ENCODE measurements at regions of chr3 and their contacts with region 1.

Region 1: DNA sequence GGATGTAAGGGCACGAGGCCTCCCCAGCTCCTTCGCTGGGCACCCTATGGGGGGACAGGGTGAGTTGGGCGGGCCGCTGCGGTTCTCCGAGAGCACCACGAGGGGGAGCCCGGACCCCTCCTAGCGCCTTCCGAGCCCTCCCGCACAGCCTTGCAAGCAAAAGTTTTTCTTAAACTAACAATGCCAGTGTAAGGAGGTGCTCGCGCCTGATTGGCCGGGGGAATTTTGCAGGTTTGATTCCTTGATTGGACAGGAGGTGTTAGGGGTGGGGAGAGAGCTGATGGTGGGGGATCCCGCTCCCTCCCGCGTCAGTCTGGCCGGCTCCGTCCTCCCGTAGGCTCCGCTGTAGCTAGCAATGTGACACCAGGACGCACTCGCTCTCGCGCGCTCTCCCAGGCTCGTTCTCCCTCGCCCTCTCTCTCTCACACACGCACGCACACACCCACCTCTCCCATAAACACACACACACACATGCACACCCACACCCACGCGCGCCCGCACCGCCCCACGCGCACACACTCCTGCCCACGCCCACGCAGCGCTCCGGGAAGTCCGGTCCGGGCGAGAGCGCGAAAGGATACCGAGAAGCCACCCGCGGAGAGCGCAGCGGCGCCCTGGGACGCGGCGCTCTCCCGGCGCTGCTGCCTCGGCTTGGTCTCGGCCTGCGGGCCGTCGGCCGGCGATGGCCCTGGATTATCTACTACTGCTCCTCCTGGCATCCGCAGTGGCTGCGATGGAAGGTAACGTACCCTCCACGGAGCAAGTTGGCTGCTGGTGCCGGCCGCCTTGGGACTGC is at the start of gene EPHB1:
- DNase-seq: peak; percentile 94
- H3K4me3 ChIP-seq: peak within 1 kb of the TSS; percentile 54 to 82 (median 59)
- H3K27ac ChIP-seq: peak within 1 kb of the TSS; percentile 58 to 81 (median 70)
- H3K4me1 ChIP-seq: peaks cover 0 to 54% (median 36%) of the 10 kb centered on the region in 4 donors
- H3K27me3 ChIP-seq: peaks cover 0 to 25% (median 5%) of the 10 kb centered on the region in 3 donors
- CTCF ChIP-seq: peak; percentile 75 to 97 (median 83)
- EP300 ChIP-seq: no peak
- POLR2A ChIP-seq: peak in 1 of 2 donors; percentile 56
- total RNA-seq, gene EPHB1: 2.5 to 17.3 (median 10.0) TPM

Region 2: DNA sequence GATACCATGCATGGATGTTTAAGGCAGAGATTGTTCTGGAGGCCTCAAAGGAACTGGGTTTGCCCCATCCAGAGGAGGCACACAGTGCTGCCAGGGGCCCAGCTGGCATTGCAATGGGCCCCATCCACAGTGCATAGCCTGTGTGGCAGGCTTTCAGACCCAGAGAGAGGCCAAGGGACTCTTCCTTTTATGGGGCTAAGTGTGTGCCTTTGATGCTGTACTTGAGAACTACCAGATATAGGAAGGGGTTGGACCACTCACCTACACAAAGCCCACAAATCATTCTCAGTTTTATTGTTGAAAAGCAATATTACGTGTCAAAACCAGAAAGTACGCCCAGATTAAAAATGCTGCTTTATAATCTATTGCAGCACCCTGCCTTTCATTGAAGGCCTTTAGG is 134.8 kb after region 1 on chr3:
- intact Hi-C with region 1: loop called (anchors 5 kb)
- DNase-seq: peak; percentile 67
- H3K4me3 ChIP-seq: no peak overlapping the region
- H3K27ac ChIP-seq: peak overlapping the region in 3 of 4 donors; percentile 62 to 83 (median 78)
- H3K4me1 ChIP-seq: peaks cover 0 to 55% (median 11%) of the 10 kb centered on the region in 4 donors
- H3K27me3 ChIP-seq: no peaks in the 10 kb centered on the region
- CTCF ChIP-seq: no peak
- EP300 ChIP-seq: peak in 1 of 4 donors; percentile 40
- POLR2A ChIP-seq: no peak

Region 3: GRCh38 chr3:135503760-135504686 is 708.9 kb after region 1 on chr3:
- intact Hi-C with region 1: loop called (anchors 2 kb)
- DNase-seq: peak; percentile 73
- H3K4me3 ChIP-seq: no peak overlapping the region
- H3K27ac ChIP-seq: no peak overlapping the region
- H3K4me1 ChIP-seq: peaks cover 0 to 5% (median 0%) of the 10 kb centered on the region in 4 donors
- H3K27me3 ChIP-seq: no peaks in the 10 kb centered on the region
- CTCF ChIP-seq: peak in 3 of 4 experiments; percentile 26 to 51 (median 51)
- EP300 ChIP-seq: no peak
- POLR2A ChIP-seq: no peak

Region 4: GRCh38 chr3:135895106-135895733 is 1100.1 kb after region 1 on chr3:
- intact Hi-C with region 1: loop called (anchors 2 kb)
- DNase-seq: peak; percentile 63
- H3K4me3 ChIP-seq: no peak overlapping the region
- H3K27ac ChIP-seq: no peak overlapping the region
- H3K4me1 ChIP-seq: no peaks in the 10 kb centered on the region
- H3K27me3 ChIP-seq: no peaks in the 10 kb centered on the region
- CTCF ChIP-seq: peak; percentile 32 to 78 (median 53)
- EP300 ChIP-seq: no peak
- POLR2A ChIP-seq: no peak

Measured in sigmoid colon (tissue), 7 donors.